ENCODE measurements at regions of chr19 and their contacts with region 1.

Region 1: GRCh38 chr19:34556488-34556887 is 74.9 kb downstream of the WTIP start:
- DNase-seq: peak; percentile 8
- H3K4me3 ChIP-seq: no peak overlapping the region
- H3K27ac ChIP-seq: no peak overlapping the region
- H3K4me1 ChIP-seq: no peaks in the 10 kb centered on the region
- H3K27me3 ChIP-seq: peaks cover 1 to 3% of the 10 kb centered on the region in 2 experiments
- CTCF ChIP-seq: peak; percentile 48 to 53
- POLR2A ChIP-seq: no peak

Region 2: DNA sequence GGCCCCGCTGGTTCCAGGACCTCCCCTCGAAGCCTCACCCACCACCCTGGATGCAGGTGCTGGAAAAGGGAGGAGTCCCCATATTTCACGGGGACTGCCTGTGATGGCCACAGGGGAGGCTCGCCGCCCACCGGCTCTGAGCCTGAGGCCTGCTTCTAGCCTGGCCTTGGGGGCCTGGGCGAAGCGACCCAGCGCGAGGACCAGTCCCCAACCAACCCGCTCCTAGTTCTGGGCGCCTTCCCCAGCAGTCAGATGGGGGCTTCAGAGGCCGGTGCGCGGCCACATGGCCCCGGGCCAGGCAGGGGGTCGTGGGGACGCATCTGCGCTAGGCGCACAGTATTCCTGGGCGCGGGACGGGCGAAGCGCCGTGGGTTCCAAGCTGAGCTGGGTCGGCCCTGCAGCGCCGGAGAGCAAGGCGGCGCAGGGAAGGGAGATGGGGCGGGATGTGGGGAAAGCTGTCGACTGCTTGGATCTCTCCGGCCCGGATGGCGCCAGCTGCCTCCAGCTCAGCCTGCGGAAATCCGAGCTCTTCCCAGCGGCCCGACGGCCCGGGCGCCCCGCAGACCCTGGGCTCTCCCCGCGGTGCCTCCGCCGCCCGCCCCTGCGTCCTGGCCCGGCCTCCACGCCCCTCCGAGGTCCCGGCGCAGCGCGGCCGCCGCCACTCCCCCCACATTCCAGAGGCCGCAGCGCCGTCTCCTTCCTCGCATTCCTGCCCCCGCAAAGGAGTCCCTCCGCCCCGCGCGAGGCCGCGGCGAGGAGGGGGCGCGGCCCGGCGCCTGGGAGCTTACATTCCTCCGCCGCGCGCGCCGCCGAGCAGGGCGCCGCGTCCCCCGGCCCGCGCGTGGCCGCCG is 75.3 kb before region 1 on chr19 and contains the start of gene WTIP:
- CTCF ChIA-PET with region 1: no interaction called
- POLR2A ChIA-PET with region 1: no interaction called
- dilution Hi-C with region 1: no loop called
- intact Hi-C with region 1: no loop called
- DNase-seq: peak; percentile 82
- H3K4me3 ChIP-seq: peak within 1 kb of the TSS; percentile 45 to 77 (median 53)
- H3K27ac ChIP-seq: peak within 1 kb of the TSS; percentile 65
- H3K4me1 ChIP-seq: peaks cover 16% of the 10 kb centered on the region
- H3K27me3 ChIP-seq: no peaks in the 10 kb centered on the region
- CTCF ChIP-seq: no peak
- POLR2A ChIP-seq: peak; percentile 56
- total RNA-seq, gene WTIP: 25.7 and 26.9 TPM in 2 replicates

Region 3: GRCh38 chr19:34662919-34663318 is 106.4 kb after region 1 on chr19:
- CTCF ChIA-PET with region 1: no interaction called
- POLR2A ChIA-PET with region 1: no interaction called
- dilution Hi-C with region 1: no loop called
- intact Hi-C with region 1: loop called (anchors 5 kb)
- DNase-seq: peak; percentile 29
- H3K4me3 ChIP-seq: no peak overlapping the region
- H3K27ac ChIP-seq: no peak overlapping the region
- H3K4me1 ChIP-seq: no peaks in the 10 kb centered on the region
- H3K27me3 ChIP-seq: no peaks in the 10 kb centered on the region
- CTCF ChIP-seq: peak; percentile 34 to 36
- POLR2A ChIP-seq: no peak

Region 4: GRCh38 chr19:34712395-34713261 is 156.1 kb after region 1 on chr19:
- CTCF ChIA-PET with region 1: interaction called, 5 read pairs
- POLR2A ChIA-PET with region 1: no interaction called
- dilution Hi-C with region 1: no loop called
- intact Hi-C with region 1: loop called (anchors 1 kb)
- DNase-seq: peak; percentile 75
- H3K4me3 ChIP-seq: no peak overlapping the region
- H3K27ac ChIP-seq: no peak overlapping the region
- H3K4me1 ChIP-seq: no peaks in the 10 kb centered on the region
- H3K27me3 ChIP-seq: peaks cover 3% of the 10 kb centered on the region in 2 experiments
- CTCF ChIP-seq: peak; percentile 39 to 40
- POLR2A ChIP-seq: no peak